ENCODE measurements at regions of chr10 and their contacts with region 1.

Region 1: DNA sequence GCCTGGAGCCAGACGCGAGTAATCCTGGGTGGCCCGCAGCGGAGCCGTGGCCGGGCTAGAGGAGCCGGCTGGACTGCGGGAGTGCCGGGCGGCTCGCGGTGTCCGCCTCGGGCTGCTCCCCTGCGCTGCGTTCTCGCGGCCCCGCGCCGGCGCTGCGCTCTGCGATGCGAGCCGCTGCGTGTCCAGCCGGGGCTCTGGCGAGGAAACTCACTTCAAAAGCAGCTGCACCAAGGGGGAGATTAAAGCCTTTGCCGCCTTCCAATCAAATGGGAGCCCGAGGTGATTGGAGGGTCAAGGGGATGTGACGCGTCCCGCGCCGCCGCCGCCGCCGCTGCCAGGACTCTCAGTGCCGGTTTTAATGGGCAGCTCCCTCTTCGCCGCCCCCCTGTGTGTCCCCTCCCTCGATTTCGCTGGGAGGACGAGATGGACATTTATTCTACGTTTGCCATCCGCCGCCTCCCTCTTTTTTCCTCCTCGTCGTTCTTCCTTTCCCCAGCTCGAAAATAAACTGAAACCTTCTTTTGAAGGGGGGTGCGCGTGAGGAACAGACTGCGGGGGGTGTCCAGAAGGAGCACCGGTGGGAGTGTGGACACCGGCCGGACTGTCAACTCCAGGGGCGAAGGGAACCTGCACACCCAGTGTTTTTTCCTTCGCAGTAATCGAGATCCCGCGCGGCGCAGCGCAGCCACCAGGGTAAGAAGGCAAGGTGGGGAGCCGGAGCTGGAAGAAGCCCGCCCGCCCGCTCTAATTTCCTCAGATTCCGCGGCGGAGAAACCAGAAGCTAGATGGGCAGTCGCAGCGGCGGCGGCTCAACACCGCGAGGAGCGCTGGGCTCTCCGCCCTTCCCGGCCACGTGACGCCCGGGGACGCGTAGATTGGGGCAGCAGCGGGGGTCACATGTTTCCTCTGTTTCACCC is at the start of gene ZNF503:
- DNase-seq: peak; percentile 94 to 99
- H3K4me3 ChIP-seq: peak within 1 kb of the TSS; percentile 89 to 95
- H3K27ac ChIP-seq: peak within 1 kb of the TSS; percentile 97 to 98
- H3K4me1 ChIP-seq: peaks cover 0 to 9% of the 10 kb centered on the region in 2 donors
- H3K27me3 ChIP-seq: no peaks in the 10 kb centered on the region
- CTCF ChIP-seq: peak in 2 of 3 experiments; percentile 30 to 54
- total RNA-seq, gene ZNF503: 28.8 TPM

Region 2: DNA sequence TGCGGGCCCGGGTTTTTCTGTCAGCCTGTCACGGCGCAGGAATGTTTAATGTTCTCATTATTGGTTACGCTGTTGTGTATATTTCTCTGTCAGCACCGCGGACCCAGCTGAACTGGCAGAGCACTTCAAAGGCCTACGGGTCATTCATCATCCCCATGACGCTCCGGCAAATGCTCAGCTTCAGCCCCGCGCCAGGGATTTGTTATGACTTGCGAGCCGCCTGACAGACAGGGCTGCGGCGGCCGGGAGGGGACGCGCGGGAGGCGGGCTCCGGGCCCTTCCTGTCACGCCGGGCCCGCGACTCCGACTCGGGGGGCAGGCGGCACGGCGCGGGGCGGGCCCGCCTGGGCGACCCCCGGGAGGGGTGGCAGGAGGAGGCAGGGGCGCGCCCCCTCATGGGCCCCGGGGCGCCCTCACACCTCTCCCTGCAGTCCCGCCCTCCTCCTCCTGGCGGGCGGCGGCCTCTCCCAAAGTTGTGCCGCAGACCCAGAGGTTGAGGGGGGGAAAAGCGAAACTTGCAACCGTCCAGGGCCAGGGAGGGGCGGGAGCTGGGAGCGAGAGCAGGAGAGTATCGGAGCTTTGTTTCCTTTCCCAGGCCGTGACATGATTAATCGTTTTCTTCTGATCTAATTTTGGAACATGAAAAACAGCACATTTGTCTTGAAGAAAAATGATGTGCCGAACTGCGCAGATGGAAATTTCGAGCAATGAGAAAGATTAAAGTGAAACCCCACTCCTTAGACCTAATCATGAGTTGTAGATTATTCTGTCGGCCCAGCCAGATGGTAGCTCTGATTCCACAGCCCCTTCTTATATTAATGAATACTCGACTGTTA is 106.7 kb before region 1 on chr10:
- intact Hi-C with region 1: loop called (anchors 2 kb)
- DNase-seq: peak; percentile 60 to 93
- H3K4me3 ChIP-seq: peak overlapping the region; percentile 79 to 92
- H3K27ac ChIP-seq: peak overlapping the region; percentile 91 to 94
- H3K4me1 ChIP-seq: peaks cover 11 to 23% of the 10 kb centered on the region in 2 donors
- H3K27me3 ChIP-seq: no peaks in the 10 kb centered on the region
- CTCF ChIP-seq: peak in 2 of 3 experiments; percentile 20 to 51

Region 3: DNA sequence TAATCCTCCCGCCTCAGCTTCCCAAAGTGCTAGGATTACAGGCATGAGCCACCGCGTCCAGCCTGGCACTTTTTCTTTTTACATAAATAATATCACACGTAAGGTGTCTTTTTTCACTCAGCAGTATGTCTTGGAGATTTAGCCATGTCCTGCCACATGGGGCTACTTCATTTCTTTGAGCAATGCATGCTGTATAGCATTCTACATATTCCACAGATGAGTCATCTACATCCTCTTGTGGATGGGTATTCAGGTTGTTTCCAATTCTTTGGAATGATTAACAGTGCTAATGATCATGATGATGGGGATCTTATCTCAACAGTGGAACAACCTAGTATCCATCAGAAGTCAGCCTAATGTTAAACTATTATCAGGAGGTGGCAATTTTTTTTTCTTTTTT is 51.0 kb before region 1 on chr10:
- intact Hi-C with region 1: no loop called
- DNase-seq: no peak
- H3K4me3 ChIP-seq: no peak overlapping the region
- H3K27ac ChIP-seq: no peak overlapping the region
- H3K4me1 ChIP-seq: no peaks in the 10 kb centered on the region
- H3K27me3 ChIP-seq: no peaks in the 10 kb centered on the region
- CTCF ChIP-seq: no peak

Region 4: DNA sequence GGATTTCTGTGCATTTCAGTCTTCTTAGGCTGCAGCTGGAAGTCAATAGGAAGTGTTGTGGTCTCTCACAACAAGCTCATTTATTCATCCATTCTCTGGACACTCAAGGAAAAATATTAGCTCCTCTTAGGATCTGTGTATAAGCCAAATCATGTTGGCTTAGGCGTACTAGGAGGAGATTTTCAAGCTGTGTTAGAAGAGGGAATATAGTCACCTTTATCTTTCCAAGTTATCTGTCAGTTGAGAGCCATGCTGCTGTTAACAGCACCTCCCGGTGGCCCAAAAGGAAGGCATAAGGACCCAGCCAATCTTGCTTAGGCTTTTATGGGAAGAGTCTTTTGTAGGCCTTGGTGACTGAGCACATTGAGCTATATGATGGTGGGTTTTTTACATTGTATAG is 249.6 kb after region 1 on chr10:
- intact Hi-C with region 1: no loop called
- DNase-seq: no peak
- H3K4me3 ChIP-seq: no peak overlapping the region
- H3K27ac ChIP-seq: no peak overlapping the region
- H3K4me1 ChIP-seq: peaks cover 12 to 37% of the 10 kb centered on the region in 2 donors
- H3K27me3 ChIP-seq: no peaks in the 10 kb centered on the region
- CTCF ChIP-seq: peak in 1 of 3 experiments; percentile 7

Region 5: DNA sequence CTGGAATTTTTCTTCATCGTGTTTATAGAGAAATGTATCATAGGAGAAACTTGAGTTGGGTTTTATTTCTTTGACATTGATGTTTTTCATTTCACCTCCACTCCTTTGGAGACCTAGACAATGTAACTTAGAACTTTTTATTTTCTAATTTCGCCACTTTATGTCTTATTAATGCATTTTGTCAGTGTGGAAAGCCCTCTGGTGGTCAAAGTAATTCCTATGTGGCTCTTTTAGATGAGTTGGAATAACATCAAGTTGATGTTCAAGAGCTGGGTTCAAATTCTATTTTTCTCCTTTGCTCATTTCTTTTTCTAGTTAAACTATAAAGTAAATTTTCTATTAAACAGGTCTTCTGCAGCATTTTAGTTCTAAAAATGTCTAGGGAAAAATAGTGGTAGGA is 508.2 kb after region 1 on chr10:
- intact Hi-C with region 1: loop called (anchors 1 kb)
- DNase-seq: no peak
- H3K4me3 ChIP-seq: no peak overlapping the region
- H3K27ac ChIP-seq: no peak overlapping the region
- H3K4me1 ChIP-seq: no peaks in the 10 kb centered on the region
- H3K27me3 ChIP-seq: no peaks in the 10 kb centered on the region
- CTCF ChIP-seq: peak; percentile 55 to 65 (median 65)

Region 6: DNA sequence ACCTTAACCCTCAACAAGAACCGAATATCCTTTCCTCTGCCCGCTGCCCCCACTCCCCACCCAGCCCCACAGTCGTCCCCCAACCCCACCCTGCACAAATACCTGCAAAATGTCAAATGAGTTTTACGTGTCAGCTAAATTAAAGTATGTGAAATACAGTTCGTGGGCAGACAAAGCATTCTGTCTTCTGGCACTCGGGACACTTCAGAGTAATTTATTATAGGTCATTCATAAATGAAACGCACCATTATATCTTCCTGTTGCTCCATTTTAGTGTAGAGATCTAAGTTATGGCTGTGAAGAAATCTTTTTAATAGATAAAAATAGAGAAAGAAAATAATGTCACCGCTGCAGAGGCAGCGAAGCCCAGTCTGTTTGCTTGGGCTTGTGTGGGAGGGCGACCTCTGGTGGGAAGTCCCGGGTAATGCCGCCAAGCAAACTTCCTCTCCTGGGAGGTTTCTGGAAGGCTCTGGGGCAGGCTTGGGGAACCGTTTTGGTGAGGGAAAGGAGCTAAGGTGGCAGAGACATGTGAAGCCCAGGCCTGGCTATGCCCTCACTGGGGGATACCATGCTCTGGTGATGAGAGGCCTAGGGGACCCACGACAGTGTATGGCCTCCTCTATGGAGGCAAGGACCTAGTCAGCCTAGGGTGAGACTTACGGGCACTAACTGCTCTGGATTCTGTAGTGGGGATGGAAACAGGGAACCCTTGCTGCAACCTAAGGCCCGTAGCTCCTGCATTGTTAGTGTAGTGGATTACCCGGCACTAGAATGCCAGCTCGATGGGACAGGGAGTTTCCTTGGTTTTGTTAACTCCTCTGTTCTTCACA is 634.5 kb after region 1 on chr10:
- intact Hi-C with region 1: loop called (anchors 1 kb)
- DNase-seq: peak; percentile 18 to 88
- H3K4me3 ChIP-seq: peak overlapping the region; percentile 37 to 52
- H3K27ac ChIP-seq: peak overlapping the region; percentile 39 to 50
- H3K4me1 ChIP-seq: peaks cover 0 to 13% of the 10 kb centered on the region in 2 donors
- H3K27me3 ChIP-seq: no peaks in the 10 kb centered on the region
- CTCF ChIP-seq: peak; percentile 89 to 97 (median 93)

Region 7: GRCh38 chr10:76397181-76397881 is 995.5 kb after region 1 on chr10:
- intact Hi-C with region 1: loop called (anchors 10 kb)
- DNase-seq: peak; percentile 46 to 89
- H3K4me3 ChIP-seq: peak overlapping the region; percentile 16 to 47
- H3K27ac ChIP-seq: peak overlapping the region; percentile 91 to 92
- H3K4me1 ChIP-seq: peaks cover 17 to 44% of the 10 kb centered on the region in 2 donors
- H3K27me3 ChIP-seq: no peaks in the 10 kb centered on the region
- CTCF ChIP-seq: peak in 2 of 3 experiments; percentile 41 to 42

Region 8: GRCh38 chr10:77011874-77012811 is 1610.3 kb after region 1 on chr10:
- intact Hi-C with region 1: loop called (anchors 5 kb)
- DNase-seq: peak in 1 of 2 donors; percentile 73
- H3K4me3 ChIP-seq: peak overlapping the region in 1 of 2 donors; percentile 4
- H3K27ac ChIP-seq: peak overlapping the region; percentile 87 to 94
- H3K4me1 ChIP-seq: peaks cover 14 to 38% of the 10 kb centered on the region in 2 donors
- H3K27me3 ChIP-seq: no peaks in the 10 kb centered on the region
- CTCF ChIP-seq: no peak